ENCODE measurements at regions of chr16 and their contacts with region 1.

Region 1: GRCh38 chr16:29678691-29679267 is at the start of gene QPRT:
- DNase-seq: no peak
- H3K4me3 Mint-ChIP-seq: peak within 1 kb of the TSS; percentile 59
- H3K27ac Mint-ChIP-seq: peak within 1 kb of the TSS; percentile 57
- H3K4me1 Mint-ChIP-seq: peaks cover 20% of the 10 kb centered on the region
- H3K27me3 Mint-ChIP-seq: no peaks in the 10 kb centered on the region
- total RNA-seq, gene QPRT: 8.3 to 9.2 TPM

Region 2: DNA sequence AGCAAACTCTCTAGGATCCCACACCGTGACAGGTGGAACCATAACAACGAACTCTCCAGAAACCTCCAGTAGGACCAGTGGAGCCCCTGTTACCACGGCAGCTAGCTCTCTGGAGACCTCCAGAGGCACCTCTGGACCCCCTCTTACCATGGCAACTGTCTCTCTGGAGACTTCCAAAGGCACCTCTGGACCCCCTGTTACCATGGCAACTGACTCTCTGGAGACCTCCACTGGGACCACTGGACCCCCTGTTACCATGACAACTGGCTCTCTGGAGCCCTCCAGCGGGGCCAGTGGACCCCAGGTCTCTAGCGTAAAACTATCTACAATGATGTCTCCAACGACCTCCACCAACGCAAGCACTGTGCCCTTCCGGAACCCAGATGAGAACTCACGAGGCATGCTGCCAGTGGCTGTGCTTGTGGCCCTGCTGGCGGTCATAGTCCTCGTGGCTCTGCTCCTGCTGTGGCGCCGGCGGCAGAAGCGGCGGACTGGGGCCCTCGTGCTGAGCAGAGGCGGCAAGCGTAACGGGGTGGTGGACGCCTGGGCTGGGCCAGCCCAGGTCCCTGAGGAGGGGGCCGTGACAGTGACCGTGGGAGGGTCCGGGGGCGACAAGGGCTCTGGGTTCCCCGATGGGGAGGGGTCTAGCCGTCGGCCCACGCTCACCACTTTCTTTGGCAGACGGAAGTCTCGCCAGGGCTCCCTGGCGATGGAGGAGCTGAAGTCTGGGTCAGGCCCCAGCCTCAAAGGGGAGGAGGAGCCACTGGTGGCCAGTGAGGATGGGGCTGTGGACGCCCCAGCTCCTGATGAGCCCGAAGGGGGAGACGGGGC is 14.5 kb before region 1 on chr16:
- CTCF ChIA-PET with region 1: interaction called, 10 read pairs
- intact Hi-C with region 1: no loop called
- DNase-seq: peak; percentile 63
- H3K4me3 Mint-ChIP-seq: peak overlapping the region; percentile 96
- H3K27ac Mint-ChIP-seq: peak overlapping the region; percentile 98
- H3K4me1 Mint-ChIP-seq: peaks cover 54% of the 10 kb centered on the region
- H3K27me3 Mint-ChIP-seq: no peaks in the 10 kb centered on the region

Region 3: GRCh38 chr16:29710227-29711219 is 31.7 kb after region 1 on chr16:
- CTCF ChIA-PET with region 1: no interaction called
- intact Hi-C with region 1: no loop called
- DNase-seq: peak; percentile 64
- H3K4me3 Mint-ChIP-seq: no peak overlapping the region
- H3K27ac Mint-ChIP-seq: peak overlapping the region; percentile 20
- H3K4me1 Mint-ChIP-seq: peaks cover 15% of the 10 kb centered on the region
- H3K27me3 Mint-ChIP-seq: no peaks in the 10 kb centered on the region

Measured in activated naive CD4-positive, alpha-beta T cell treated with anti-CD3 and anti-CD28 coated beads for 36 hours (primary cell).